ENCODE measurements at regions of chr13 and their contacts with region 1.

Region 1: DNA sequence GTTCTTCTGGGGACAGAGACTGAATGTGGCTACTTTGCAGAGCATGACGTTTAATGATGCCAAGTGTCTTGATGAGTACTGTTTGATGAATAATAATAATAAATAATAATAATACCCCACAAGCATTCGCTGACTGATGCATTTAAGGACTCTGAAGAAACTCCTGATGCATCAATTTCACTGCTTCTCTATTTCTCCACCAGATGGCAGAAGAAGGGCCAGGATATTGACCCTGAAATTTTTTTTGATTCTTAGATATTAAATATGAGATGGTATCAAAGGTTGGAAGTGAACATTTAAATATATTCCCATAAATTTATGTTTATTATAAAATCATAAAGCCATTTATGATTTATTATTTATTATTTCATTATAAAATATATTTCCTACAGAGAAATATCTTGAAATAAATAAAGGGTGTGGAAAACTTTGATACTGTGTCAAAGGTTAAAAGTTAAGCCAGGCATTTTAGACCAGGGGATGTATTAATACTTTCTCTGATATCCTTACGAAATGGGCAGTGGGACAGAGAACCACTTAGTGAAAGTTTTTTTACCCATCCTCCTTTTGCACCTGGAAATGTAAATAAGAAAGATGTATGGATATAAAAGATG is 170.9 kb downstream of the LACC1 start:
- DNase-seq: no peak
- H3K4me3 Mint-ChIP-seq: no peak overlapping the region
- H3K27ac Mint-ChIP-seq: no peak overlapping the region
- H3K4me1 Mint-ChIP-seq: peaks cover 4% of the 10 kb centered on the region
- H3K27me3 Mint-ChIP-seq: peaks cover 11% of the 10 kb centered on the region

Region 2: GRCh38 chr13:44093607-44094564 is 43.3 kb after region 1 on chr13:
- intact Hi-C with region 1: loop called (anchors 2 kb)
- DNase-seq: no peak
- H3K4me3 Mint-ChIP-seq: no peak overlapping the region
- H3K27ac Mint-ChIP-seq: no peak overlapping the region
- H3K4me1 Mint-ChIP-seq: peaks cover 14% of the 10 kb centered on the region
- H3K27me3 Mint-ChIP-seq: peaks cover 11% of the 10 kb centered on the region

Region 3: DNA sequence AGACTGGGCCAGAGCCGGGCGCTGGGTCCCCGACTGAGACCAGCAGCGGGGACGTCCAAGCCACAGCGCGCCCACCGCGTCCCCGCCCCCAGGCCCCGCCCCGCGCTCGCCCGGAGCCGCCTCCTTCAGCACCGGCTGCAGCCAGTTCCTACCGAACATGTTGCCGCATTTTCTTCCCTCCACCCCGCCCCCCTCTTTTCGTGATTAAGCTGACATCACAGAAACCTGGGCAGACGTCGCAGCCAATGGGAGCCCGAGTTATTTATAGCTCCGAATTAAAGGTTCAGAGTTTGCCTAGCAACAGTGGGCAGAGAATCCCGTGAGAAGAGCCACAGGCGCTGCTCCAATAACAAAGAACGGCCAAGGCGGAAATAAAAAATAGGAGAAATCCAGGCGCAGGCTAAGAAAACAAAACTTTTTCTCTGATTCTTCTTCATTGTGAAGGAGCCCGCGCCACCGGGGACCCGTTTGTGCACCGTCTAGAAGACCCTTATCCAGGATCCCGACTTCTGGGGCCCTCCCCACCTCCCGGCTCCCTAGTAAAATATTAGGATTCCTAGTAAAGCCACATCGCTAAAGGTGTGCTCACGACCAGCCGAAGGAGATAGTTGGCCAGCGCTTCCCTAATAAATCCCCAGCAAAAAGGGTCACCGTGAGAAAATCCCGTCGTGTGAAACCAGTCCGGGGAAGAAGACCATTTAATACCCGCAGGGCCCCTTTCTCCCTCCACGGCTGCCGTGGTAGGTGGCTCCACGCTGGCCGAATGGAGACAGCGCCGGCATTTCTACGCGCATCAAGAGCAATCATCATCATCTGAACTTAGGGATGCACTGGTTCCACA is 384.8 kb after region 1 on chr13:
- intact Hi-C with region 1: loop called (anchors 1 kb)
- DNase-seq: peak; percentile 70
- H3K4me3 Mint-ChIP-seq: peak overlapping the region; percentile 83
- H3K27ac Mint-ChIP-seq: peak overlapping the region; percentile 72
- H3K4me1 Mint-ChIP-seq: peaks cover 17% of the 10 kb centered on the region
- H3K27me3 Mint-ChIP-seq: peaks cover 47% of the 10 kb centered on the region

Region 4: GRCh38 chr13:44470638-44471562 is 420.3 kb after region 1 on chr13:
- intact Hi-C with region 1: loop called (anchors 1 kb)
- DNase-seq: no peak
- H3K4me3 Mint-ChIP-seq: no peak overlapping the region
- H3K27ac Mint-ChIP-seq: no peak overlapping the region
- H3K4me1 Mint-ChIP-seq: no peaks in the 10 kb centered on the region
- H3K27me3 Mint-ChIP-seq: peaks cover 8% of the 10 kb centered on the region

Measured in activated T-helper 1 cell treated with anti-CD3 and anti-CD28 coated beads, Interleukin-12 subunit alpha, Interleukin-12 subunit beta, Interleukin-2, Interleukin-4 antibody, amounts not matched to agents 30 ng/mL and 10 ng/mL and 1 ng/mL, durations not matched to agents 14 hours and 24 hours and 36 hours (primary cell).